ENCODE measurements at regions of chr5 and their contacts with region 1.

Region 1: DNA sequence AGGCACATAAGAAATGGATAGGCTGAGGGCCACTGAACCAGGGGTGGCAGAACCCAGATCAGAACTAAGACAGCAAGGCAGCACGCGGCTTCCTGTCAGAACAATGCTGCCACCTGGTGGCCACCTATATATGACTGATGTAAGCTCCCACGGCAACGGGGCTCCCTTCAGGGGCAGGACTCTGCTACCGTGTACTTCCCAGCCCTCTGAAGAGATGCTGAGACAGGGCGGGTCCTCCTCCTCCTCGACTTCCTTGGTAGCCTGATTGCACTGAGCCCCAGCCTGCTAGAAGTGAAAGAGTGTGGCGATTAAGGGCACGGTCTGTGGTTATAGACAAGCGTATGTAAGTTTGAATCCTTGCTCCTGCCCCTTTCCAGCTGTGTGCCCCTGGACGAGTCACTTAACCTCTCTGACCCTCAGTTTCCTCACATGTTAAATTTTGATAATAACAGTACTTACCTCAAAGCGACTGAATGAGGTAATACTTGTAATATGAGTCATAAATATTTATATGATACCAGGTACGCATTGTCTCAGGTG is 13.3 kb downstream of the RPS14 start:
- DNase-seq: peak; percentile 72
- ATAC-seq: peak; percentile 88
- H3K4me3 ChIP-seq: 0 out of 4 replicates have a peak overlapping the region, but pooled peaks of 1 of the 2 experiments have one; percentile 11
- H3K27ac ChIP-seq: no peak overlapping the region
- H3K4me1 ChIP-seq: no peaks in the 10 kb centered on the region
- H3K27me3 ChIP-seq: no peaks in the 10 kb centered on the region
- CTCF ChIP-seq: peak; percentile 92

Region 2: DNA sequence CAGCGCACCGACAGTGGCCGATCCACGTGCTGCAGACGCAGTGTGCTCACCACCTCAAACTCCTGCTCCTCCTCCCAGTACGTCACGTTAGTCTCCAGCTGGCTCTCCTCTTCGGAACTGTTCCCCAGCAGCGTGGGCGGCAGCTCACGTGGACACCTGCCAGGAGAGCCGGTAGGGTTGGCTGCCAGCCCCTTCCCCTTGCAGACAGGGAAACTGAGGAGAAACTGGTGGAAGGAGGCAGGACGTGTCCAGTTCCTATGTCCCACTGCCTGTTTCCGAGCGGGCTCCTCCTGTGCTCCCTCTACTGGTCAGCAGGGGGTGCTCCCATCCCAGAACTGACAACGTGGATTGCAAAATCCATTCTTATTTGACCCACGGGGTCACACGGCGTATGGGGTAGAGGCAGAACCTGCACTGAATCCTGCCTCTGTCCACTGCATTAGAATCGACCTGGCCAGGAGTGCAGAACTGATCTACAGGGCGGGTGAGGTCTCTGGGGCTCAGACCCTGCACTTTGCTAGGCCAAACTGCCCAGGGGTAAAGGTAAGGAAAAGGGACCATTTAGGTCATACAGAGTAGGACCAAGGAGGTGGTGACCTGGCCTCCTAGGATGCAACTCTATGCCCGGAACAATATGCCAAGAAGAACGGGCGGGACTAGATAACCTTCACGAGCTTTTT is 306.3 kb before region 1 on chr5:
- CTCF ChIA-PET with region 1: no interaction called
- POLR2A ChIA-PET with region 1: no interaction called
- in situ Hi-C with region 1: no loop called
- intact Hi-C with region 1: loop called (anchors 1 kb)
- DNase-seq: peak; percentile 60
- ATAC-seq: peak; percentile 88
- H3K4me3 ChIP-seq: peak overlapping the region; percentile 24 to 48
- H3K27ac ChIP-seq: 0 out of 2 replicates have a peak overlapping the region, but pooled peaks have one; percentile 11
- H3K4me1 ChIP-seq: peaks cover 7% of the 10 kb centered on the region
- H3K27me3 ChIP-seq: no peaks in the 10 kb centered on the region
- CTCF ChIP-seq: peak; percentile 96

Region 3: DNA sequence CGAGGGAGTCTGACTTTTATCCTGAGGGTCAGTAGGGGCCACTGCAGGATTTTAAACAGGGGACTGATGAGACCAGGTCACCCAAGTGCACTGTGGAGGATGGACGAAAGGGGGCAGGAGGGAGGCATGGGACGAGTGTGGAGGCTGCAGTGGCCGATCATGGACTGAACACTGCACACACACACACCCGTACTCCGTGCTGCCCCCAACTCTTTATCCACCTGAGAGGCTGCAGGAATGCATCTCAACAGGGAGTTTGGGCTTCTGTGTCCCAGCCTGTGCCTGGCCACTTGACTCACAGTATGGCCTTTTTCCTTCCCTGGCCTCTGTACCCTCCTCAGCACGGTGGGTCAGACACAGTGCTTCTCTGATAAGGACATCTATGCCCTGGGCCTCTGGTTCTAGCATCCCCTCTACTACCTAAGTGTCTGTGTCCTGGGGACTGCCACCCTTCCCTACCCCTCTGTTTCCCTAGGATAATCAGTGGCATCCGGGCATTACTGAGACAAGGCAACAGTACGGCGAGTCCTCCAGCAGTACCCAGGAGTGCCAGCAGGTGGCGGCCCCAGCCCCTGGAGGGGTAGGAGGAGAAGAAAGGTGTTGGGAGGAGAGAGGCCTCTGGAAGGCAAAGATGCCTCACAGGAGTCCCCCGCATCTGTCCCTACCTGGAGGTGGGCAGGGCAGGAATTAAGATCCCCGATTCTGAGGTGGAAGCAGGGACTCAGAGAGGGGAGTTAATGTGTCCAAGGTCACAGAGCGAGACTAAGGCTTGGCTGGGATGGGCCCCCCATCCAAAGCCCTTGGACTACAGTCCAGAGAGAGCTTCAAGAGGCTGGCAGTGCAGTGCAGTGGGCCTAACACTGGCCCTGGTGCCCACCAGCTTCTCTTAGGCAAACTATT is 274.7 kb before region 1 on chr5:
- CTCF ChIA-PET with region 1: no interaction called
- POLR2A ChIA-PET with region 1: no interaction called
- in situ Hi-C with region 1: no loop called
- intact Hi-C with region 1: loop called (anchors 1 kb)
- DNase-seq: peak; percentile 64
- ATAC-seq: peak; percentile 92
- H3K4me3 ChIP-seq: peak overlapping the region in 1 of 2 experiments; percentile 27; a peak in 2 of 4 replicates
- H3K27ac ChIP-seq: no peak overlapping the region
- H3K4me1 ChIP-seq: no peaks in the 10 kb centered on the region
- H3K27me3 ChIP-seq: no peaks in the 10 kb centered on the region
- CTCF ChIP-seq: peak; percentile 98

Region 4: GRCh38 chr5:150227606-150228273 is 208.5 kb before region 1 on chr5:
- CTCF ChIA-PET with region 1: no interaction called
- POLR2A ChIA-PET with region 1: no interaction called
- in situ Hi-C with region 1: no loop called
- intact Hi-C with region 1: loop called (anchors 10 kb)
- DNase-seq: no peak
- ATAC-seq: peak; percentile 32; the same call in 1 of the 2 replicates
- H3K4me3 ChIP-seq: no peak overlapping the region
- H3K27ac ChIP-seq: no peak overlapping the region
- H3K4me1 ChIP-seq: no peaks in the 10 kb centered on the region
- H3K27me3 ChIP-seq: no peaks in the 10 kb centered on the region
- CTCF ChIP-seq: no peak

Region 5: GRCh38 chr5:150272526-150272925 is 163.7 kb before region 1 on chr5:
- CTCF ChIA-PET with region 1: interaction called, 5 read pairs
- POLR2A ChIA-PET with region 1: no interaction called
- in situ Hi-C with region 1: no loop called
- intact Hi-C with region 1: loop called (anchors 5 kb)
- DNase-seq: peak; percentile 24
- ATAC-seq: peak; percentile 86
- H3K4me3 ChIP-seq: no peak overlapping the region
- H3K27ac ChIP-seq: no peak overlapping the region
- H3K4me1 ChIP-seq: no peaks in the 10 kb centered on the region; the same call in 1 of the 2 replicates
- H3K27me3 ChIP-seq: no peaks in the 10 kb centered on the region
- CTCF ChIP-seq: no peak